ENCODE measurements at regions of chr16 and their contacts with region 1.

Region 1: GRCh38 chr16:29023279-29024277 is 38.7 kb downstream of the LAT start:
- DNase-seq: peak; percentile 45
- ATAC-seq: no peak
- H3K4me3 Mint-ChIP-seq: no peak overlapping the region
- H3K27ac Mint-ChIP-seq: peak overlapping the region; percentile 82
- H3K4me1 Mint-ChIP-seq: peaks cover 74% of the 10 kb centered on the region
- H3K27me3 Mint-ChIP-seq: no peaks in the 10 kb centered on the region

Region 2: GRCh38 chr16:28935924-28936783 is 87.4 kb before region 1 on chr16:
- CTCF ChIA-PET with region 1: no interaction called
- POLR2A ChIA-PET with region 1: no interaction called
- intact Hi-C with region 1: no loop called
- DNase-seq: peak; percentile 95
- ATAC-seq: peak; percentile 100
- H3K4me3 Mint-ChIP-seq: peak overlapping the region; percentile 71
- H3K27ac Mint-ChIP-seq: peak overlapping the region; percentile 83
- H3K4me1 Mint-ChIP-seq: peaks cover 14% of the 10 kb centered on the region
- H3K27me3 Mint-ChIP-seq: no peaks in the 10 kb centered on the region

Region 3: GRCh38 chr16:28964072-28964471 is 59.5 kb before region 1 on chr16:
- CTCF ChIA-PET with region 1: no interaction called
- POLR2A ChIA-PET with region 1: no interaction called
- intact Hi-C with region 1: no loop called
- DNase-seq: no peak
- ATAC-seq: no peak
- H3K4me3 Mint-ChIP-seq: no peak overlapping the region
- H3K27ac Mint-ChIP-seq: no peak overlapping the region
- H3K4me1 Mint-ChIP-seq: no peaks in the 10 kb centered on the region
- H3K27me3 Mint-ChIP-seq: no peaks in the 10 kb centered on the region

Region 4: DNA sequence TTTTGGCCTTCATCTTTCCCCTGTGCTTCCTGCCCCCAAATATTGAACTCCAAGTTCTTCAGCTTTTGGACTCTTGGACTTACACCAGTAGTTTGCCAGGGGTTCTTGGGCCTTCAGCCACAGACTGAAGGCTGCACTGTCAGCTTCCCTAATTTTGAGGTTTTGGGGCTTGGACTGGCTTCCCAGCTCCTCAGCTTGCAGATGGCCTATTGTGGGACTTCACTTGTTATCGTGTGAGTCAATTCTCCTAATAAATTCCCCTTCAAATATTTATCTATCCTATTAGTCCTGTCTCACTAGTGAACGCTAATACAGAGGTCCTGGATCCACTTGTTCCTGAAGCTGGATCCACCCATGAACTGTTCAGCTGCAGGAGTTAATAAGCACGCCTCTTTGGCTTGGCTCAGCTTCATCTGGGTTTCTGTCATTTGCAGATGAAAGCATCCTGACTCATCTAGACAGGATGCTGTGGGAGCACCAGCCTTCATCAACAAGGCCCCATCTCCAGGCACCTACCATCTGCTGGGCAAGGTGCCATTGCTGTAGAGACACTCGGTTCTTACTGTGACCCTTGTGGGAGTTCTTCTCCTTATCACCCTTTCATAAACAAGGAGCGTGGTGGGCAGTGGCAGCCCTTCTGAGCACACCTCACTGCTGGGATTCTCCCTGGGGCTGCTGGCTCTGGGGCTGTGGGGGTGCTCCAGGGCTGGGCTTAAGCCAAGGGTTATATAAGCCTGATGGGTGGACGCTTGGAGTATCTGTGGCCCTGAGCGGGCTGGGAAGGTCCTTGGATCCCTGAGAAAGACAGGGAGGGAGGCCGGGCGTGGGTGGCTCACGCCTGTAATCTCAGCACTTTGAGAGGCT is 15.6 kb before region 1 on chr16:
- CTCF ChIA-PET with region 1: interaction called, 17 read pairs
- POLR2A ChIA-PET with region 1: interaction called, 12 read pairs
- intact Hi-C with region 1: loop called (anchors 1 kb)
- DNase-seq: peak; percentile 89
- ATAC-seq: peak; percentile 91
- H3K4me3 Mint-ChIP-seq: peak overlapping the region; percentile 33
- H3K27ac Mint-ChIP-seq: peak overlapping the region; percentile 91
- H3K4me1 Mint-ChIP-seq: peaks cover 63% of the 10 kb centered on the region
- H3K27me3 Mint-ChIP-seq: no peaks in the 10 kb centered on the region

Region 5: DNA sequence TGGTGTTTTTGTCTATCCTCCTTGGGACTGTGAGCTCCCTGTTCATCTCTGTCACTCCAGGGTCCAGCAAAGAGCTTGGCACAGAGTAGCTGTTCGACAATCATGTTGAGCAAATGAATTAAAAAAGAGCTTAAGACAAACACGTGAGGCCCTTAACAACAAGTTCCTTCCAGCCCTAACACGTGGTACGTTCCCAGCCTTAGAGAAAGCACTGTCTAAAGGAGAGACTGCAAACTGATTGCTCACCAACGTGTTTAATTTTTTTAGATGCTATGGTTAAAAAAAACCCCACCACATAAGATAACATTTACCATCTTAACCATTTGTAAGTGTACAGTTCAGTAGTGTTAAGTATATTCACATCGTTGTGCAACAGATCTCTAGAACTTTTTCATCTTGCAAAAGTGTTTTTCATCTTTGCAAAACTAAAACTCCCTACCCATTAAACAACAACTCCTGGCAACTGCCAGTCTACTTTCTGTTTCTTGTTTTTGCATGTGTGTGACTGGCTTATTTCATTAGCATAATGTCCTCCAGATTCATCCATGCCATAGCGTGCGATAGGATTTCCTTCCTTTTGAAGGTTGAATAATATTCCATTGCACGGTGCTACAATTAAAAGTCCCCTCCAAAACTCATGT is 10.5 kb before region 1 on chr16:
- CTCF ChIA-PET with region 1: interaction called, 17 read pairs
- POLR2A ChIA-PET with region 1: interaction called, 12 read pairs
- intact Hi-C with region 1: loop called (anchors 1 kb)
- DNase-seq: peak; percentile 48
- ATAC-seq: peak; percentile 44
- H3K4me3 Mint-ChIP-seq: no peak overlapping the region
- H3K27ac Mint-ChIP-seq: peak overlapping the region; percentile 93
- H3K4me1 Mint-ChIP-seq: peaks cover 68% of the 10 kb centered on the region
- H3K27me3 Mint-ChIP-seq: no peaks in the 10 kb centered on the region

Measured in activated CD4-positive, alpha-beta T cell treated with anti-CD3 and anti-CD28 coated beads for 36 hours (primary cell).